Activated T-helper 1 cell treated with anti-CD3 and anti-CD28 coated beads, Interleukin-12 subunit alpha, Interleukin-12 subunit beta, Interleukin-2, Interleukin-4 antibody, amounts not matched to agents 30 ng/mL and 10 ng/mL and 1 ng/mL, durations not matched to agents 14 hours and 24 hours and 36 hours (primary cell): ENCODE measurements at regions of chr3 and their contacts with region 1.

Region 1: DNA sequence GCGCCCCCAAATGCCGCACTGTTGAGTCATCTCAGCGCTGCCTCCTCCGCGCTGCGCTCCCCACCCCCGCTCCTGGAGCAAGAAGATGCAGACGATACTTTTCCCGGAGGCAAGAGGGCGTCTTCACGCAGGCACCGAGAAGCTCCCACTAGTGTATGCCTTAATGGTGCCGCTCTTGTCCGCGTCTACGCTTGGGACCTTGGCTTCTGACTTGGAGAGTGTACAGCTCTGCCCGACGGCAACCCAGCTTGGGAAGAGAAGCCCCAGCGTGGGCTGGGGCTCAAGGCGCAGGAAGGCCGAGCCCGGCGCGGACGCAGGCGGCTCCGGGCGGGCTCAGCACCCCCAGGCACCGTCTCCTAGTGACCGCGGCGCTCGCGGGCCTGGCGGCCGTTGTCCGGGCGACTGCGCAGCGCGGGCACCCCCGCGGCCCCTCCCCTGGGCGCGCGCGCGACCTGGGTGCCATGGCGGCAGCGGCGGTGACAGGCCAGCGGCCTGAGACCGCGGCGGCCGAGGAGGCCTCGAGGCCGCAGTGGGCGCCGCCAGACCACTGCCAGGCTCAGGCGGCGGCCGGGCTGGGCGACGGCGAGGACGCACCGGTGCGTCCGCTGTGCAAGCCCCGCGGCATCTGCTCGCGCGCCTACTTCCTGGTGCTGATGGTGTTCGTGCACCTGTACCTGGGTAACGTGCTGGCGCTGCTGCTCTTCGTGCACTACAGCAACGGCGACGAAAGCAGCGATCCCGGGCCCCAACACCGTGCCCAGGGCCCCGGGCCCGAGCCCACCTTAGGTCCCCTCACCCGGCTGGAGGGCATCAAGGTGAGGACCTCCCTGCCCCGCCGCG is at the start of gene P4HTM:
- DNase-seq: peak; percentile 64
- H3K4me3 Mint-ChIP-seq: peak within 1 kb of the TSS; percentile 95
- H3K27ac Mint-ChIP-seq: peak within 1 kb of the TSS; percentile 91
- H3K4me1 Mint-ChIP-seq: peaks cover 49% of the 10 kb centered on the region
- H3K27me3 Mint-ChIP-seq: no peaks in the 10 kb centered on the region
- total RNA-seq, gene P4HTM: 34.5 and 36.8 TPM in 2 replicates

Region 2: GRCh38 chr3:48847504-48848423 is 142.3 kb before region 1 on chr3 and contains the start of gene PRKAR2A:
- intact Hi-C with region 1: loop called (anchors 2 kb)
- DNase-seq: peak; percentile 79
- H3K4me3 Mint-ChIP-seq: peak within 1 kb of the TSS; percentile 87
- H3K27ac Mint-ChIP-seq: peak within 1 kb of the TSS; percentile 71
- H3K4me1 Mint-ChIP-seq: peaks cover 22% of the 10 kb centered on the region
- H3K27me3 Mint-ChIP-seq: no peaks in the 10 kb centered on the region
- total RNA-seq, gene PRKAR2A: 34.7 and 38.8 TPM in 2 replicates

Region 3: GRCh38 chr3:48898383-48899234 is 91.4 kb before region 1 on chr3 and contains the start of gene SLC25A20:
- intact Hi-C with region 1: no loop called
- DNase-seq: peak; percentile 92
- H3K4me3 Mint-ChIP-seq: peak within 1 kb of the TSS; percentile 94
- H3K27ac Mint-ChIP-seq: peak within 1 kb of the TSS; percentile 95
- H3K4me1 Mint-ChIP-seq: peaks cover 29% of the 10 kb centered on the region
- H3K27me3 Mint-ChIP-seq: no peaks in the 10 kb centered on the region
- total RNA-seq, gene SLC25A20: 15.9 and 17.4 TPM in 2 replicates

Region 4: GRCh38 chr3:49021813-49022687 is 32.0 kb after region 1 on chr3 and contains the start of gene NDUFAF3:
- intact Hi-C with region 1: loop called (anchors 1 kb)
- DNase-seq: peak; percentile 91
- H3K4me3 Mint-ChIP-seq: peak within 1 kb of the TSS; percentile 91
- H3K27ac Mint-ChIP-seq: peak within 1 kb of the TSS; percentile 99
- H3K4me1 Mint-ChIP-seq: peaks cover 41% of the 10 kb centered on the region
- H3K27me3 Mint-ChIP-seq: no peaks in the 10 kb centered on the region
- total RNA-seq, gene NDUFAF3: 126 and 129 TPM in 2 replicates

Region 5: DNA sequence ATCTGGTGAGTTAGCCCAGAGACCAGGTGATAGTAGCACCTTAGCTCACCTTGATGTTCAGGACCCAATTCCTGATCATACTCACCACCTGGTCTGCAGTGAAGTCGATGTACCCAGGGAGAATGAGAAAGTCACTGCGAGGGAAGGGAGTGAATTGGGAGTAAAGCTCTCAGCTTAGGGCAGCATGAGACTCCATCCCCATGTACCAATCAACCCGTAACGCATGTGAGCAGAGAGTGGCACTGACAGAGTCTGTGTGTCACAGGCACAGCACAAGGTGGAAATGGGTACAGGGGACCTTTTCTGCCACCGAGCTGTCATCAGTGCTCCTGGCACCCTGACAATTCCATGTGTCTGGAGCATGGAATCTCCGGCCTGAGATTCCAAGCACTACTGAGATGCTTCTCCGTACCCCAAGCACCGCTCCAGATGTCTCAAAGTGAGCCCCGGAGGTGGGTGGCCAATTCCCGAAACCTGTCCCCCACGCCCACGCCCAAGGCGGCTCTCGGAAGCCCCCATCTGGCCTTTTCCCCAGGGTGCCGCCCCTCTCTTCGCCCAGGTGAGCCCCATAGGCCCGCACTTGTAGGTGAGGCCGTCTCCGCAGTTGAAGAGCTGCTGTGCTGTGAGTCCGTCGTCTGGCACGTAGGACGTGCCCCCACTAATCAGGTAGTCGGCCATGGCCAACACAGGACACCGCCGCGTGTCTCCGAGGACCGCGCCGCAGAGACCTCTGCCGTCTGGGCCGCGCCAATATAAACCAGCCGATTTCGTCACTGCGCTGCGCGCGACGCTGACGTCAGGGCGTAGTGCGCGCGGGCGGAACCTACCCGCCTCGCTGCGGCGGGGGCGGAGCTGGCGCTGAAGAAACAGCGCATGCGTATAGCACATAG is 38.9 kb after region 1 on chr3 and contains the start of gene IMPDH2:
- intact Hi-C with region 1: loop called (anchors 2 kb)
- DNase-seq: peak; percentile 92
- H3K4me3 Mint-ChIP-seq: peak within 1 kb of the TSS; percentile 93
- H3K27ac Mint-ChIP-seq: peak within 1 kb of the TSS; percentile 90
- H3K4me1 Mint-ChIP-seq: peaks cover 50% of the 10 kb centered on the region
- H3K27me3 Mint-ChIP-seq: no peaks in the 10 kb centered on the region
- total RNA-seq, gene IMPDH2: 423 and 434 TPM in 2 replicates

Region 6: DNA sequence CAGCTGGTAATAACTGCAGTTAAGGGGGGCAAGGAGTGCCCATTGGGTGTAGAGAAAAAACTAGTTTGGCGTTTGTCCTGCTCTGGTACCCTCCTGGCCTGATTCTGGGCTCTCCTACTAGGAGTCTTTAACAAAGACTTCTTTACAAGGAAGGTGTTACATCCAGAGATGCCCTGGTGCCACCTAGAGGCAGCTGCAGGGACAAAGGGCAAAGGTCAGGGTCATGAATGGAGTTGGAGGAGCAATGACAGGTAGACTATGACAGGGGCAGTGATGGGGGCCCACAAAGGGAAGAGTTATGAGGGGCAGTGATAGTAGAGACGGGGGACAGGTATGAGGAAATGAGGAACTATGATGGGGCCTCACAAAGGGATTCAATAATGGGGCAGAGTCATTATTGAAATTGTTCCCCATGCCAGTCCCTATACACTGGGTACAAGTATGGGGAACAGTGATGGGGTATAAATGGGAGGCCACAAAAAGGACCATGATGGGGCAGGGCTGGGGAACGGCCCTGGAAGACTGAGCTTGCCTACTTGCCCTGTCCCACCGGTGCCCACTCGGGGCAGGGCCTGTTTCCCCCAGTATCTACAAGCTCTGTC is 168.2 kb after region 1 on chr3:
- intact Hi-C with region 1: loop called (anchors 1 kb)
- DNase-seq: peak; percentile 47
- H3K4me3 Mint-ChIP-seq: no peak overlapping the region
- H3K27ac Mint-ChIP-seq: no peak overlapping the region
- H3K4me1 Mint-ChIP-seq: no peaks in the 10 kb centered on the region
- H3K27me3 Mint-ChIP-seq: no peaks in the 10 kb centered on the region

Region 7: GRCh38 chr3:49445381-49445780 is 455.4 kb after region 1 on chr3:
- intact Hi-C with region 1: loop called (anchors 5 kb)
- DNase-seq: no peak
- H3K4me3 Mint-ChIP-seq: no peak overlapping the region
- H3K27ac Mint-ChIP-seq: no peak overlapping the region
- H3K4me1 Mint-ChIP-seq: peaks cover 12% of the 10 kb centered on the region
- H3K27me3 Mint-ChIP-seq: no peaks in the 10 kb centered on the region